Adrenal gland (tissue), 19 donors: ENCODE measurements at regions of chr14 and their contacts with region 1.

Region 1: GRCh38 chr14:23929822-23930294 is 23.7 kb upstream of the DHRS4 start:
- DNase-seq: peak; percentile 64 to 92 (median 79)
- H3K4me3 ChIP-seq: no peak overlapping the region
- H3K27ac ChIP-seq: no peak overlapping the region
- H3K4me1 ChIP-seq: no peaks in the 10 kb centered on the region
- H3K27me3 ChIP-seq: no peaks in the 10 kb centered on the region
- CTCF ChIP-seq: peak; percentile 60 to 91 (median 82)
- POLR2A ChIP-seq: no peak

Region 2: DNA sequence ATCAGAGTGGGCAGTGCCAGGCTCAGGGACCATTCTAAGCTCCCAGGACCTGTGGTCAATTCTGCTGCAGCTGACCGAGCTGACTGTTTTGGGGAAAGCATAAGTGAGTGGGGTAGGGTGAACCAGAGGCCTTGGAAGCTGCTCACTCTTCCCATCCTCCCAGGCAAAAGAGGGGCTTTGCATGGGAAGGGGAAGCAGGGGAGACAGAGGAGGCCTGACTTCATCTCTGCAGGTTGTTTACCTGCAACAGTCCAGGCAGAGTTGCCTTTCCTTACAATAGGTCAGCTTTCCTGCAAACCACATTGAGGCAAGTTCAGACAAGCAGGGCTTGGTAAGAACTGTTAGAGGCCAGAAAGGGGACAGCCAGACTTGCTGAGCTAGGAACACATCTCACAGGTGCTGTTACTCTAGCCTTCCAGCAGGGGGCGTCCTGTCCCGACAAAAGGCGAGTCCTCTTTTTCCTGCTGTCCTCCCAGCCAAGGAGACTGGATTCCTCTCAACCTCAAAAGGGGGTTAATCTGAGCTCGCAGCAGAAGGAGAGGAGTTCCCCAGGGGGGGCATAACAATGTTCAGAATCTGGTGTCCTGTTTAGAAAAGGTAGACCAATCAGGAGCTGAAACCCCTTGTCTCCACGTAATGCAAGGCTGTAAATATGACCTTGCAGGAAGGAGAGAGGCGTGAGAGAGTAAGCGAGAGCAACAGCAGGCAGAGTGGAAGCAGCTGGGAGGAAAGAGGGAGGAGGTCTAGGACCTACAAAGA is 298.0 kb before region 1 on chr14:
- intact Hi-C with region 1: loop called in 1 of 2 experiments (anchors 5 kb)
- DNase-seq: peak; percentile 69 to 88 (median 77)
- H3K4me3 ChIP-seq: peak overlapping the region in 1 of 4 donors; percentile 44
- H3K27ac ChIP-seq: no peak overlapping the region
- H3K4me1 ChIP-seq: peaks cover 0 to 9% of the 10 kb centered on the region in 2 donors
- H3K27me3 ChIP-seq: no peaks in the 10 kb centered on the region
- CTCF ChIP-seq: peak; percentile 87 to 95 (median 93)
- POLR2A ChIP-seq: no peak

Region 3: GRCh38 chr14:23727566-23728335 is 202.1 kb before region 1 on chr14:
- intact Hi-C with region 1: loop called in 1 of 2 experiments (anchors 5 kb)
- DNase-seq: peak in 5 of 7 donors; percentile 43 to 71 (median 58)
- H3K4me3 ChIP-seq: no peak overlapping the region
- H3K27ac ChIP-seq: no peak overlapping the region
- H3K4me1 ChIP-seq: no peaks in the 10 kb centered on the region
- H3K27me3 ChIP-seq: no peaks in the 10 kb centered on the region
- CTCF ChIP-seq: peak; percentile 38 to 58 (median 52)
- POLR2A ChIP-seq: no peak

Region 4: GRCh38 chr14:24232121-24232644 is 302.3 kb after region 1 on chr14 and contains the start of gene NEDD8:
- intact Hi-C with region 1: no loop called
- DNase-seq: peak; percentile 86 to 97 (median 94)
- H3K4me3 ChIP-seq: peak within 1 kb of the TSS; percentile 23 to 86 (median 78)
- H3K27ac ChIP-seq: peak within 1 kb of the TSS; percentile 45 to 99 (median 82)
- H3K4me1 ChIP-seq: peaks cover 29 to 47% of the 10 kb centered on the region in 2 donors
- H3K27me3 ChIP-seq: no peaks in the 10 kb centered on the region
- CTCF ChIP-seq: no peak
- POLR2A ChIP-seq: peak in 1 of 2 donors; percentile 13
- total RNA-seq, gene NEDD8: 154 to 454 (median 216) TPM